ENCODE measurements at regions of chr17 and their contacts with region 1.

Region 1: DNA sequence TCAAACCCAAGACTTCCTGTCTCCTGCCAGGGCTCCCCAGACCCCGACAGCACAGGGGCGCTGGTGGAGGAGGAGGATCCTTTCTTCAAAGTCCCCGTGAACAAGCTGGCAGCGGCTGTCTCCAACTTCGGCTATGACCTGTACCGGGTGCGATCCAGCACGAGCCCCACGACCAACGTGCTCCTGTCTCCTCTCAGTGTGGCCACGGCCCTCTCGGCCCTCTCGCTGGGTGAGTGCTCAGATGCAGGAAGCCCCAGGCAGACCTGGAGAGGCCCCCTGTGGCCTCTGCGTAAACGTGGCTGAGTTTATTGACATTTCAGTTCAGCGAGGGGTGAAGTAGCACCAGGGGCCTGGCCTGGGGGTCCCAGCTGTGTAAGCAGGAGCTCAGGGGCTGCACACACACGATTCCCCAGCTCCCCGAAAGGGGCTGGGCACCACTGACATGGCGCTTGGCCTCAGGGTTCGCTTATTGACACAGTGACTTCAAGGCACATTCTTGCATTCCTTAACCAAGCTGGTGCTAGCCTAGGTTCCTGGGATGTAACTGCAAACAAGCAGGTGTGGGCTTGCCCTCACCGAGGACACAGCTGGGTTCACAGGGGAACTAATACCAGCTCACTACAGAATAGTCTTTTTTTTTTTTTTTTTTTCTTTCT is 8.1 kb downstream of the SERPINF1 start:
- DNase-seq: no peak
- H3K4me3 ChIP-seq: no peak overlapping the region
- H3K4me3 Mint-ChIP-seq: no peak overlapping the region
- H3K27ac ChIP-seq: no peak overlapping the region
- H3K27ac Mint-ChIP-seq: no peak overlapping the region
- H3K4me1 ChIP-seq: peaks cover 13 to 14% of the 10 kb centered on the region in 2 donors
- H3K4me1 Mint-ChIP-seq: peaks cover 13% of the 10 kb centered on the region
- H3K27me3 ChIP-seq: no peaks in the 10 kb centered on the region
- H3K27me3 Mint-ChIP-seq: peaks cover 0 to 6% (median 2%) of the 10 kb centered on the region in 3 donors
- CTCF ChIP-seq: no peak

Region 2: DNA sequence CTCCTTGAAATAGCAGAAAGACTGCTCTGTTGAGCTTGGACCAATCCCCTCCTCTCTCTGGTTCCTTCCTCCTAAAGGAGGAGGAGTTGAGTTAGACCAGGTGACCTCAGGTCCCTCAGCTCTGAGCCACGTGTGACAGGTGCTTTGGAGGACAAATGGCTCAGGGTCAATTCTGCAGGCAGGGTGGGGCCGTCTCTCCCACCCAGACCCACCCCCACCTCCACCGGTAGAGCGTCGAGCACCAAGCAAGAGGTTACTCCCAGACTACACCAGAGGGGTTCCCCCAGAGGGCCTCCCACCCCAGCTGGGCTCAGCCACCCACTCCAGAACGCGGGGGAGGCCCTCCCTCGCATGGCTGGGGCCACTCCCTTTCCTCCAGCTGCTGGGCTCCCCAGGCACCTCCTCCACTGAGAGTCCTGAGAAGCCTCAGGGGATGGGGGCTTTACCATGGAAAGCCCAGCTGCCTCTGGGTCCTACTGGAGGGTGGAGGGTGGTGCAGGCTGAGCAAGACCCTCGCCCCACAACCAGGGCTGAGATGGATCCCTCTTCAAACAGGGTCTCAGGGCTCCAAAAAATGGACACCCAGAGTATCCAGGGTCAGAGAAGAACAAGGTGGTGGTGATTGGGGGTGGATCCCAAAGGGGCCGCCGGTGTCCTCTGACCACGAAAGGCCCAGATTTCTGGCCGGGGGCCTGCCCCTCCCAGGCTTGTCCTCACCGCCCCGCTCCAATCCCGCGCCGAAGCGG is 285.1 kb before region 1 on chr17:
- intact Hi-C with region 1: no loop called
- DNase-seq: peak in 2 of 3 donors; percentile 26 to 49
- H3K4me3 ChIP-seq: peak overlapping the region in 1 of 3 experiments; percentile 66
- H3K4me3 Mint-ChIP-seq: peak overlapping the region; percentile 64 to 85
- H3K27ac ChIP-seq: no peak overlapping the region
- H3K27ac Mint-ChIP-seq: peak overlapping the region in 2 of 7 donors; percentile 50 to 58
- H3K4me1 ChIP-seq: peaks cover 34 to 42% of the 10 kb centered on the region in 2 donors
- H3K4me1 Mint-ChIP-seq: peaks cover 27% of the 10 kb centered on the region
- H3K27me3 ChIP-seq: peaks cover 6 to 51% of the 10 kb centered on the region in 2 donors
- H3K27me3 Mint-ChIP-seq: peaks cover 52 to 78% (median 59%) of the 10 kb centered on the region in 3 donors
- CTCF ChIP-seq: no peak

Region 3: GRCh38 chr17:1730328-1731193 is 39.4 kb before region 1 on chr17:
- intact Hi-C with region 1: loop called in 1 of 2 experiments (anchors 5 kb)
- DNase-seq: no peak
- H3K4me3 ChIP-seq: no peak overlapping the region
- H3K4me3 Mint-ChIP-seq: no peak overlapping the region
- H3K27ac ChIP-seq: no peak overlapping the region
- H3K27ac Mint-ChIP-seq: peak overlapping the region in 1 of 7 donors; percentile 37
- H3K4me1 ChIP-seq: peaks cover 5 to 9% of the 10 kb centered on the region in 2 donors
- H3K4me1 Mint-ChIP-seq: peaks cover 21% of the 10 kb centered on the region
- H3K27me3 ChIP-seq: no peaks in the 10 kb centered on the region
- H3K27me3 Mint-ChIP-seq: peaks cover 0 to 2% (median 0%) of the 10 kb centered on the region in 3 donors
- CTCF ChIP-seq: no peak

Measured in CD14-positive monocyte (primary cell).